Heart left ventricle (tissue), 16 donors: ENCODE measurements at regions of chr4 and their contacts with region 1.

Region 1: DNA sequence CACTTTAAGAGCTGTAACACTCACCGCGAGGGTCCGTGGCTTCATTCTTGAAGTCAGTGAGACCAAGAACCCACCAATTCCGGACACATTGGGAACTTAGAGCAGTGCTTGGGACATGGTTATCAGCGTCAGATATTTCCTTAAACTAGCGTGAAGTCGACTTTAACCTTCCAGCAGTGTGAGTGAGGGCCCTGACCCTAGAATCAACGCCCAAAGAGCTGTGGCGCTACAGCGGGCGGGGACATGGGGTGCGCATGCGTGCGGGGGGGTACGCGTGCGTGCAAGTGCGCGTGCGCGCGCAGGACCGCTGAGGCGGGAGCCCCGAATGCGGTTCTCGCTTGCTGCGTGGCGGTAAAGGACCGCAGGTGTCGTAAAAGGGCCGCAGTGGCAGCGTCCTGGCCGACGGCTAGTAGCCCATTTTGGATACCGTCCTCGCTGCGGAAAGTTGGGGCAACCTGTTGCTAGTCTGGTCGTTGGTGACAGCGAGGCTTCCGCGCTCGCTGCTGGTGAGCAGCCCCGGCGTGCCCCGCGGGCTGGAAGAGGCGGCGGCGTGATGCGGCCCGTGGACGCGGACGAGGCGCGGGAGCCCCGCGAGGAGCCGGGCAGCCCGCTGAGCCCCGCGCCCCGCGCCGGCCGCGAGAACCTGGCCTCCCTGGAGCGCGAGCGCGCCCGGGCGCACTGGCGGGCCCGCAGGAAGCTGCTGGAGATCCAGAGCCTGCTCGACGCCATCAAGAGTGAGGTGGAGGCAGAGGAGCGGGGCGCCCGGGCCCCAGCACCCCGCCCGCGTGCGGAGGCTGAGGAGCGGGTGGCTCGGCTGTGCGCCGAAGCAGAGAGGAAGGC is 19.8 kb upstream of the S100P start:
- DNase-seq: peak; percentile 94 to 97 (median 96)
- ATAC-seq: peak; percentile 88 to 95 (median 90)
- H3K4me3 ChIP-seq: peak overlapping the region; percentile 47 to 96 (median 74)
- H3K27ac ChIP-seq: peak overlapping the region; percentile 38 to 89 (median 84)
- H3K4me1 ChIP-seq: peaks cover 3 to 41% (median 30%) of the 10 kb centered on the region in 12 donors
- H3K27me3 ChIP-seq: no peaks in the 10 kb centered on the region
- CTCF ChIP-seq: no peak
- POLR2A ChIP-seq: peak in 1 of 2 donors; percentile 72

Region 2: GRCh38 chr4:6640292-6641163 is 33.4 kb before region 1 on chr4 and contains the start of gene MRFAP1:
- intact Hi-C with region 1: loop called in 2 of 10 experiments (anchors 1 to 2 kb)
- DNase-seq: peak; percentile 95 to 97 (median 96)
- ATAC-seq: peak; percentile 87 to 96 (median 93)
- H3K4me3 ChIP-seq: peak within 1 kb of the TSS; percentile 48 to 96 (median 84)
- H3K27ac ChIP-seq: peak within 1 kb of the TSS; percentile 79 to 97 (median 93)
- H3K4me1 ChIP-seq: peaks cover 7 to 39% (median 28%) of the 10 kb centered on the region in 12 donors
- H3K27me3 ChIP-seq: no peaks in the 10 kb centered on the region
- CTCF ChIP-seq: peak in 1 of 12 donors; percentile 7
- POLR2A ChIP-seq: peak in 1 of 2 donors; percentile 68
- total RNA-seq, gene MRFAP1: 162 to 300 (median 239) TPM

Region 3: GRCh38 chr4:6709230-6710114 is 35.6 kb after region 1 on chr4 and contains the start of gene MRFAP1L1:
- intact Hi-C with region 1: loop called in 2 of 10 experiments (anchors 1 to 5 kb)
- DNase-seq: peak; percentile 97 to 98 (median 98)
- ATAC-seq: peak; percentile 82 to 92 (median 88)
- H3K4me3 ChIP-seq: peak within 1 kb of the TSS; percentile 63 to 97 (median 88)
- H3K27ac ChIP-seq: peak within 1 kb of the TSS; percentile 70 to 95 (median 86)
- H3K4me1 ChIP-seq: peaks cover 0 to 53% (median 43%) of the 10 kb centered on the region in 12 donors
- H3K27me3 ChIP-seq: no peaks in the 10 kb centered on the region
- CTCF ChIP-seq: peak in 3 of 12 donors; percentile 6 to 28 (median 16)
- POLR2A ChIP-seq: peak in 1 of 2 donors; percentile 43
- total RNA-seq, gene MRFAP1L1: 38.2 to 50.7 (median 41.3) TPM